Caco-2 (cell line): ENCODE measurements at regions of chr16 and their contacts with region 1.

Region 1: DNA sequence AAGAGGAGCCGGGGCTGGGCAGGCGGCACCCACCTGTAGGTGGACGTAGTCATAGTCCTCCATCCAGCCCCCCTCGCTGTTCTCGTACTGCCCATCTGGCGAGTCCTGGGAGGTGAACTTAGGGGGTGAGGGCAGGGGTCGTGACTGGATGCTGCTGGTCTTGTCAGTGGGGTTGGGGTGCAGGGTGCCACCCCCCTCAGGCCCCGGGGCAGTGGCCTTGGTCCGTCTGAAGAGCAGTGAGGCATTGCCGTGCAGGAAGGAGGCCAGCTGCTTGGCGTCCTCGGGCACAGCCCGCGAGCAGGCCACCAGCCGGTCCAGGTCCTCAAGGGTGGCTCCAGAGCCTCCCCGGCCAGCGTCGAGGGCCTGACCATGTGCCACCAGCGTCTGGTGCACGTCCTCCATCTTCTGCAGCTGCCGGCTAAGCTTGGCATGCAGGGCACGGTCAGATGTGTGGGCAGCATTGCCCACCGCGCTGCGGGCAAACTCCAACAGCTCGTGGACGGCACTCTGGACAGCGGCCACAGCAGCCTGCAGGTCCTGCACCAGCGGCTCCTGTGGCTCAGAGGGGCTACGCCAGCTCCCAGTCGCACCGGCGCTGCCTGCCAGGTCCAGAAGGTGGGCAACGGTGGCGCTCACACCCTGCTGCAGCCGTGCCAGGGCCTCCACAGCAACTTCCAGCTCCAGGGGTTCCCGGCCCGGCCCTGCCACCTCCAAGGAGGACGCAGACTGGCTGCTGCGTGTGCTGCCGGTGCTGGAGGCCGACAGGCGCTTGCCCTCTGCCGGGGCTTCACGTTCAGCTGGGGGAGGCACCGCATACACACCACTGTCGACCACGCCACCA is 16.3 kb downstream of the CTRB1 start:
- DNase-seq: no peak
- H3K4me3 ChIP-seq: no peak overlapping the region
- H3K4me3 Mint-ChIP-seq: no peak overlapping the region
- H3K27ac Mint-ChIP-seq: peak overlapping the region; percentile 60
- H3K4me1 ChIP-seq: no peaks in the 10 kb centered on the region
- H3K4me1 Mint-ChIP-seq: peaks cover 6% of the 10 kb centered on the region
- H3K27me3 ChIP-seq: no peaks in the 10 kb centered on the region
- H3K27me3 Mint-ChIP-seq: no peaks in the 10 kb centered on the region
- CTCF ChIP-seq: no peak

Region 2: DNA sequence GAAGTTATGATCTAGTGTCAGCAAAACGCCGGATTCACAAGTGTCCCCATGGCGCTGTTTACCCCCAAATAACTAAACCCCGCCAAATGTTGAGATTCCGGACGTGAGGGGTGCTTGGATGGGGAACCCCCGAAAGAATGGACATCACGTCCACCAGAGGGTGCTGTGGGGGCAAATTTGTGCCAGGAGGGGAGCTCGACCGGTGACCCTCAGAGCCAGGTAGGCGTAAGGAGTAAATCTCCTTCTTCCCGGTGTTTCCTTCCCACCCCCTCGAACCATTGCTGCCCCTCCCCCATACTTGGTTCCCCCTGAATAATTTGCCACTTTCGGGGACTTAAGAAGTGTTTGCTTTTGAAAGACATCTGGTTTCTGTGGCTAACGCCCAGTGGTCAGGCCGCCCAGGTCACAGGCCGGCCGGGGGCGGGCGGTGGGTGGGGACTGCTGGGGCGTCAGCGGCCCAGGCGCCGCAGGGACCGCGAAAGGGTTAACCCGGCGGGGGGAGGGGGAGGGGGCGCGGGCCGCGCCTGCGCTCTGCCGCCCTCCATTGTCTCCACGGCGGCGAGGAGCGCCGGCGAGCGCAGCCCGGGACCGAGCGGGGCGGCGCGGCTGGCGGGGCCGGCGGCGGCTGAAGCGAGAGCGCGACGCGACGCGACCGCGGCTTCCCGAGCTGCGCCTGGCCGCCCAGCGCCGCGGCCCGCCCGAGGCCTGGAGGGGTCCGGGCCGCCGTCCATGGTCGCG is 236.4 kb before region 1 on chr16 and contains the start of gene ZNRF1:
- CTCF ChIA-PET with region 1: no interaction called
- POLR2A ChIA-PET with region 1: no interaction called
- intact Hi-C with region 1: no loop called
- DNase-seq: peak; percentile 92 to 94
- H3K4me3 ChIP-seq: peak within 1 kb of the TSS; percentile 88
- H3K4me3 Mint-ChIP-seq: peak within 1 kb of the TSS; percentile 95
- H3K27ac Mint-ChIP-seq: peak within 1 kb of the TSS; percentile 85
- H3K4me1 ChIP-seq: peaks cover 57% of the 10 kb centered on the region
- H3K4me1 Mint-ChIP-seq: peaks cover 55% of the 10 kb centered on the region
- H3K27me3 ChIP-seq: no peaks in the 10 kb centered on the region
- H3K27me3 Mint-ChIP-seq: no peaks in the 10 kb centered on the region
- CTCF ChIP-seq: peak; percentile 89 to 95
- total RNA-seq, gene ZNRF1: 68.6 and 73.8 TPM in 2 replicates

Region 3: DNA sequence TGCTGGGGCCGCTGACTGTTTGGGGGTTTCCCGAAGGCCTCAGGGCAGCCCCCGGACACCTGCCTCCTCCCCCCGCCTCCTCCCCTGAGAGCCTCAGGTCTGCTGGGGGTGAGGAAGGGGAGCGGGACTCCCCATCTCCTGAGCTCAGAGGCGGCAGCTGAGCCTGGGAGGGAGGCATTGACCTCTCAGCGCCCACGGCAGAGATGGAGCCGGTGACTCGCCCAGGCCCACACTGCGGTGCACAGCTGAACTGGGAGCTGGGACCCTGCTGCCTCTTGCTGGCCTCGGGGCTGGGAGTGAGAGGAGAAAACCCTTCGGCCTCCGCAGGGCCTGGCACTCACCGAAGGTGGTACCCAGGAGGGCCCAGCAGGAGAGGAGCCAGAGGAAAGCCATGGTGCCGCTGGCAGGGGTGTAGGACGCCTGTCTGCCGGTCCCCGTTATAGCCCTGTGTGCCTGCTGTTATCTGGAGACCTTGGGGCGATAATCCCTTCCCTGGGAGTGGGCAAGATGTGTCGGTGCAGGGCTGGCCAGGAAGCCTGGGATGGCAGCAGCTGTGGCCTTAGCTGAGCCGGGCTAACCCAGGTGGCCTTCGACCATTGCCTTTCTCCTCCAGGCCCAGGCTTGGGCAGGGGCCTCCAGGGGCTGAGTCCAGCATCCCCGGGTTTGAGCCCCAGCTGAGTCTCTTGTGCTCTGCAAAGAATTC is 28.2 kb before region 1 on chr16 and contains the start of gene CTRB2:
- CTCF ChIA-PET with region 1: no interaction called
- POLR2A ChIA-PET with region 1: no interaction called
- intact Hi-C with region 1: no loop called
- DNase-seq: no peak
- H3K4me3 ChIP-seq: no peak within 1 kb of the TSS
- H3K4me3 Mint-ChIP-seq: no peak within 1 kb of the TSS
- H3K27ac Mint-ChIP-seq: no peak within 1 kb of the TSS
- H3K4me1 ChIP-seq: no peaks in the 10 kb centered on the region
- H3K4me1 Mint-ChIP-seq: no peaks in the 10 kb centered on the region
- H3K27me3 ChIP-seq: no peaks in the 10 kb centered on the region
- H3K27me3 Mint-ChIP-seq: no peaks in the 10 kb centered on the region
- CTCF ChIP-seq: no peak
- total RNA-seq, gene CTRB2: not detected in 2 replicates

Region 4: GRCh38 chr16:75265845-75266701 is 31.0 kb after region 1 on chr16:
- CTCF ChIA-PET with region 1: interaction called, 17 read pairs
- POLR2A ChIA-PET with region 1: no interaction called
- intact Hi-C with region 1: loop called (anchors 1 kb)
- DNase-seq: peak; percentile 94 to 96
- H3K4me3 ChIP-seq: peak overlapping the region; percentile 89
- H3K4me3 Mint-ChIP-seq: peak overlapping the region; percentile 82
- H3K27ac Mint-ChIP-seq: peak overlapping the region; percentile 95
- H3K4me1 ChIP-seq: peaks cover 46% of the 10 kb centered on the region
- H3K4me1 Mint-ChIP-seq: peaks cover 21% of the 10 kb centered on the region
- H3K27me3 ChIP-seq: no peaks in the 10 kb centered on the region
- H3K27me3 Mint-ChIP-seq: no peaks in the 10 kb centered on the region
- CTCF ChIP-seq: peak in 1 of 2 experiments; percentile 19

Region 5: DNA sequence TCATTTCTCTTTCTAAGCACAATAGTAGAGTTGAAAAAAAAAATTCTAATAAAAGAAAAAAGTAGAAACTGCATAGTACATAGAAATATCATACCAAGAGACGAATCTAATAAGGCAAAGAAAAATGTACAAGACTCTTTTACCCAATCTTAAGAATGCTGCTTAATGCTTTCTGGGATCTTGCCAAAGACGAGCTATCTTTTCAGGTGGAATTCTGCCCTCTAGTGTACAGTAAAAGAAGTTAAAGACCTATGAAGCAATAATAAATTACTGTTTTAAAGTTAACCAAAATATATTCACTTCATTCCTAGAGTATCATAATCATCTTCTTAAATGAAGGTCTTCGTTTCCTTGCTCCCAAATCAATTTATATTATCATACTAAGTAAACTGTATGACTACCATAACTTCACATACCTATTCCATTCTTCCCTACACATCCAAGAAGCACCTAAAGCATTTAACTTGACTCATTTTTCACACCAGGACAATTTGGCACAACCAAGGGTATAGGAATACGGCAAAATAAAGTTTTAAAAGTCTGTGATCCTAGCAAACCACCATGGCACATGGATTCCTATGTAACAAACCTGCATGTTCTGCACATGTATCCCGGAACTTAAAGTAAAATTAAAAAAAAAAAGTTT is 150.6 kb after region 1 on chr16:
- CTCF ChIA-PET with region 1: interaction called, 40 read pairs
- POLR2A ChIA-PET with region 1: interaction called, 6 read pairs
- intact Hi-C with region 1: loop called (anchors 1 kb)
- DNase-seq: peak in 1 of 2 experiments; percentile 37
- H3K4me3 ChIP-seq: no peak overlapping the region
- H3K4me3 Mint-ChIP-seq: no peak overlapping the region
- H3K27ac Mint-ChIP-seq: no peak overlapping the region
- H3K4me1 ChIP-seq: no peaks in the 10 kb centered on the region
- H3K4me1 Mint-ChIP-seq: no peaks in the 10 kb centered on the region
- H3K27me3 ChIP-seq: no peaks in the 10 kb centered on the region
- H3K27me3 Mint-ChIP-seq: no peaks in the 10 kb centered on the region
- CTCF ChIP-seq: peak; percentile 62 to 65

Region 6: GRCh38 chr16:75402821-75403475 is 167.9 kb after region 1 on chr16:
- CTCF ChIA-PET with region 1: interaction called, 5 read pairs
- POLR2A ChIA-PET with region 1: no interaction called
- intact Hi-C with region 1: loop called (anchors 1 kb)
- DNase-seq: peak in 1 of 2 experiments; percentile 41
- H3K4me3 ChIP-seq: no peak overlapping the region
- H3K4me3 Mint-ChIP-seq: no peak overlapping the region
- H3K27ac Mint-ChIP-seq: no peak overlapping the region
- H3K4me1 ChIP-seq: no peaks in the 10 kb centered on the region
- H3K4me1 Mint-ChIP-seq: no peaks in the 10 kb centered on the region
- H3K27me3 ChIP-seq: no peaks in the 10 kb centered on the region
- H3K27me3 Mint-ChIP-seq: no peaks in the 10 kb centered on the region
- CTCF ChIP-seq: peak; percentile 80 to 85